MCF 10A (cell line): ENCODE measurements at regions of chr2 and their contacts with region 1.

Region 1: DNA sequence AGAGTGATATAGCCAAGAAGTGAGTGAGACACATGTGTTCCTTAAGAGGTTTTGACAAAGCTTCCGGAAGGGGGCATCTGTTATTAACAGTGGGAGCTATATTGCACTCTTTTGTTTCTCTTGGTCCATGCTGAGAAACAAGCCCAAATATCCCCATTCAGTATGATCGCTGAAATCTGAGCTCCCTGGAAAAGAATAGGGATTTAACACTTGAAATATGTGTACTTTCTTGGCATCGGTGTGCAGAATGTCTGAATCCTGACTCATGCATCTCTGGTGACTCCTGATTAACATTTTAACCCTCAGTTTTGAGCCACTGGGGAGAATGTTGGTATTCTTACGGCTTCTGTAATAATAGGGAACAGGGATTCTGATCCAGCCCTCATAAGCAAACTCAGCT is 448.1 kb downstream of the TSN start:
- DNase-seq: peak; percentile 92
- H3K4me3 Mint-ChIP-seq: no peak overlapping the region
- H3K27ac Mint-ChIP-seq: peak overlapping the region; percentile 90
- H3K4me1 Mint-ChIP-seq: peaks cover 17% of the 10 kb centered on the region
- H3K27me3 Mint-ChIP-seq: no peaks in the 10 kb centered on the region
- CTCF ChIP-seq: peak; percentile 27

Region 2: GRCh38 chr2:122451040-122451439 is 247.5 kb after region 1 on chr2:
- CTCF ChIA-PET with region 1: interaction called, 9 read pairs
- POLR2A ChIA-PET with region 1: no interaction called
- intact Hi-C with region 1: loop called (anchors 1 kb)
- DNase-seq: peak; percentile 66
- H3K4me3 Mint-ChIP-seq: no peak overlapping the region
- H3K27ac Mint-ChIP-seq: no peak overlapping the region
- H3K4me1 Mint-ChIP-seq: no peaks in the 10 kb centered on the region
- H3K27me3 Mint-ChIP-seq: no peaks in the 10 kb centered on the region
- CTCF ChIP-seq: peak; percentile 66

Region 3: GRCh38 chr2:122748552-122749011 is 545.1 kb after region 1 on chr2:
- CTCF ChIA-PET with region 1: no interaction called
- POLR2A ChIA-PET with region 1: no interaction called
- intact Hi-C with region 1: loop called (anchors 10 kb)
- DNase-seq: peak; percentile 73
- H3K4me3 Mint-ChIP-seq: no peak overlapping the region
- H3K27ac Mint-ChIP-seq: peak overlapping the region; percentile 17
- H3K4me1 Mint-ChIP-seq: peaks cover 16% of the 10 kb centered on the region
- H3K27me3 Mint-ChIP-seq: no peaks in the 10 kb centered on the region
- CTCF ChIP-seq: no peak